ENCODE measurements at regions of chr10 and their contacts with region 1.

Region 1: DNA sequence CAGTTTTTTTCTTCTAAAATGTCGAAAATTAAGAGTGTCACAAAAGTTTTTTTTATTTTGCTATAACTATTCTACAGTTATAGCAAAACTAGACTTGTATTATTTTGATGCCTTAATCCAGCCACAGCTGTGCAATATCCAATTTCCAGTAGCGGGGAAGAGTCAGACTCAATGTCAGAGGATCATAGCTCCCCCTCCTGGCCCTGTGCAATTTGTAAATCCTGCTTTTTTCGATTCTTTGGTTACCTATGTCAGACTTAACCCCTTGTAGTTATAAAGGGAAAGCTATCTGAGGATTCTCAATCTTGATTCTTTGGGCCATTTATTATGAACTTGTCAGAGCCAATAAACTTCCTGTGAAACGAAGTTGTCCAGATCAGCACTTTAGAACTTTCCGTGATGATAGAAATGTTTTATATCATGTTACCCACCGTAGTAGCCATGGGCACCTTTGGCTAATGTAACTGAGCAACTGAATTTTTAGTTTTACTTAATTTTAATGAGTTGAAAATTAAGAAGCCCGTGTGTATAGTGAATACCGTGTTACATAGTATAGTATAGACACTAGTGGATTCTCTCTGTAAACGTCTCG is 87.7 kb upstream of the PRKCQ start:
- DNase-seq: peak; percentile 48
- H3K4me3 ChIP-seq: no peak overlapping the region; a peak in 1 of 4 replicates
- H3K27ac ChIP-seq: no peak overlapping the region
- H3K4me1 ChIP-seq: no peaks in the 10 kb centered on the region; a peak in 1 of 4 replicates
- H3K27me3 ChIP-seq: no peaks in the 10 kb centered on the region; the same call in 1 of the 2 replicates
- CTCF ChIP-seq: peak; percentile 72
- EP300 ChIP-seq: no peak
- RAD21 ChIP-seq: peak; percentile 73

Region 2: GRCh38 chr10:6300106-6300783 is 367.5 kb before region 1 on chr10:
- CTCF ChIA-PET with region 1: no interaction called
- POLR2A ChIA-PET with region 1: no interaction called
- DNase-seq: no peak
- H3K4me3 ChIP-seq: no peak overlapping the region
- H3K27ac ChIP-seq: peak overlapping the region; percentile 36 to 65; a peak in 3 of 4 replicates
- H3K4me1 ChIP-seq: peaks cover 6 to 33% of the 10 kb centered on the region in 2 experiments; a peak in 3 of 4 replicates
- H3K27me3 ChIP-seq: no peaks in the 10 kb centered on the region
- CTCF ChIP-seq: no peak
- EP300 ChIP-seq: no peak
- RAD21 ChIP-seq: no peak

Region 3: DNA sequence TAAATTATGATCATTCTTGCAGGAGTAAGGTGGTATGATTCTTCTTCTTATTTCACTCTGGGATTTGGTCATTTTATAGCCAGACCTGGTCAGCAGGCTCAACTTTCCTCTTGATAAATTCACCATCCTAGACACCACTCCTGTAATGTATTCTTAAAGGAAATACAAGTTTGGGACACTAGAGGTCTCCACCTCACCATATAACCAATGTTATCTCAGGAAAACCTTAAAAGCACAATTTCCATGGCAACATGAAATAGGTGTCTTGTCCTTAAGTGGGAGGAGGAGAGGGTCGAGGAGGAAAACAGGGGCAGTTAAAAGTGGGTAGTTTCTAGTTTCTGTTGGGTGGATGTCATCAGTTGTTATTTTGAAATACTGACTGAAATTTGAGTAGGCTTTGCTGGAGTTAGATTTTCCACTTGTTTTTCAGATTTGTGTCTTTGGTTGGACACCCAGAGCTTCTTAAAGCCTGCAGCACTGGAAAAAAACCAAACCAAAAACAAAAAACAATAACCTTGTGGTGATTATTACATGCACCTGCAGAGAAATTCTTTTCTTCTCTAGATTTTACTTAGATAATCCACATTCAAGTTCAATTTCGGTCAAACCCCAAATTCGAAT is 250.8 kb before region 1 on chr10:
- CTCF ChIA-PET with region 1: interaction called, 11 read pairs
- POLR2A ChIA-PET with region 1: no interaction called
- DNase-seq: peak; percentile 44
- H3K4me3 ChIP-seq: no peak overlapping the region
- H3K27ac ChIP-seq: no peak overlapping the region
- H3K4me1 ChIP-seq: no peaks in the 10 kb centered on the region
- H3K27me3 ChIP-seq: peaks cover 18% of the 10 kb centered on the region; the same call in 1 of the 2 replicates
- CTCF ChIP-seq: peak; percentile 78
- EP300 ChIP-seq: no peak
- RAD21 ChIP-seq: peak; percentile 79

Region 4: DNA sequence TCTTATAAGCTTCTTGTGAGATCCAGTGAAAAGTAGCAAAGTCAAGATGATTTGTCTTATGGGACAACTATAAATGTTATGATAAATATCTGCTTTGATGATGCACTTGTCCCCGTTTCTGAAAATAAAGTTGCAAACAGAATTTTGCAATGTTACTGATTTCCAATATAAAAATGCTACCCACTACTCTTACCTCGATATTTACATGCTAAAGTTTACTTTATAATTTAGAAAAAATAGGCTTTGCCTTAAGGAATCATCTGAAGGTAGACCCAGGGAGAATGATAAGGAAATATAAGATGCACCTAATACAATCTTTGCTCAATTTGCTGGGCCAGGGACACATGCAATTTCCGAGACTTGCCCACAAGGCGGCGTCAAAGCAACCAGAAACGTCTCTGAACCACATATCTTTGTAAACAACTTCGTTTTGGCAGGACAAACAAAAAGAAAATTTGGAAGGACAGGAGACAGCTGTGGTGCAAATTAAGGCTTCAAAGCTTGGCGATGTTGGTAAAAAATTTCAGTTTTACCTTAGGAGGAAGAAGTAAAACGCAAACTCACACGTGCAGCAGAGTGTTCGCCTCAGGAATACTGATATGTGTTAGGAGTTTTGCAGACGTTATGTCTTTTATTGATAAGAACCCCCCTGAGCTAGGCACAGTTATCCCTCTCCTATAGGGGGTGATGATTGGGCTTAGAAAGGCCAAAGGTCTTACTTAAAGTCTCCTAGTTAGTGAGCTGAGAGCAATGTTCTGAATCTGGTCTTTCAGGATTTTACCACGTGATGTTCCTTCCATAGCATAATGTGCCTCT is 222.1 kb before region 1 on chr10:
- CTCF ChIA-PET with region 1: interaction called, 13 read pairs
- POLR2A ChIA-PET with region 1: no interaction called
- DNase-seq: peak; percentile 38
- H3K4me3 ChIP-seq: no peak overlapping the region
- H3K27ac ChIP-seq: no peak overlapping the region
- H3K4me1 ChIP-seq: no peaks in the 10 kb centered on the region
- H3K27me3 ChIP-seq: peaks cover 5% of the 10 kb centered on the region; the same call in 1 of the 2 replicates
- CTCF ChIP-seq: peak; percentile 70
- EP300 ChIP-seq: no peak
- RAD21 ChIP-seq: peak; percentile 61

Region 5: GRCh38 chr10:6647811-6648526 is 19.8 kb before region 1 on chr10:
- CTCF ChIA-PET with region 1: interaction called, 10 read pairs
- POLR2A ChIA-PET with region 1: no interaction called
- DNase-seq: peak; percentile 75
- H3K4me3 ChIP-seq: no peak overlapping the region
- H3K27ac ChIP-seq: no peak overlapping the region
- H3K4me1 ChIP-seq: no peaks in the 10 kb centered on the region
- H3K27me3 ChIP-seq: no peaks in the 10 kb centered on the region
- CTCF ChIP-seq: peak; percentile 70
- EP300 ChIP-seq: no peak
- RAD21 ChIP-seq: peak; percentile 63

Region 6: GRCh38 chr10:6678211-6678803 is 10.5 kb after region 1 on chr10:
- CTCF ChIA-PET with region 1: interaction called, 13 read pairs
- POLR2A ChIA-PET with region 1: no interaction called
- DNase-seq: peak; percentile 48
- H3K4me3 ChIP-seq: no peak overlapping the region
- H3K27ac ChIP-seq: no peak overlapping the region
- H3K4me1 ChIP-seq: no peaks in the 10 kb centered on the region
- H3K27me3 ChIP-seq: 0 out of 2 replicates have a peak, but pooled peaks cover 13% of the 10 kb centered on the region
- CTCF ChIP-seq: peak; percentile 74
- EP300 ChIP-seq: no peak
- RAD21 ChIP-seq: peak; percentile 76

Region 7: GRCh38 chr10:6778992-6779701 is 111.4 kb after region 1 on chr10:
- CTCF ChIA-PET with region 1: no interaction called
- POLR2A ChIA-PET with region 1: no interaction called
- DNase-seq: no peak
- H3K4me3 ChIP-seq: no peak overlapping the region
- H3K27ac ChIP-seq: peak overlapping the region in 1 of 2 experiments; percentile 57; a peak in 2 of 4 replicates
- H3K4me1 ChIP-seq: no peaks in the 10 kb centered on the region; a peak in 1 of 4 replicates
- H3K27me3 ChIP-seq: no peaks in the 10 kb centered on the region
- CTCF ChIP-seq: no peak
- EP300 ChIP-seq: peak in 1 of 2 experiments; percentile 42; a peak in 1 of 4 replicates
- RAD21 ChIP-seq: no peak

Region 8: GRCh38 chr10:6795571-6795970 is 127.8 kb after region 1 on chr10:
- CTCF ChIA-PET with region 1: no interaction called
- POLR2A ChIA-PET with region 1: no interaction called
- DNase-seq: no peak
- H3K4me3 ChIP-seq: no peak overlapping the region
- H3K27ac ChIP-seq: no peak overlapping the region
- H3K4me1 ChIP-seq: no peaks in the 10 kb centered on the region
- H3K27me3 ChIP-seq: peaks cover 5% of the 10 kb centered on the region; the same call in 1 of the 2 replicates
- CTCF ChIP-seq: no peak
- EP300 ChIP-seq: no peak
- RAD21 ChIP-seq: no peak